ENCODE measurements at regions of chr6 and their contacts with region 1.

Region 1: GRCh38 chr6:52162940-52163908 is 23.0 kb upstream of the IL17A start:
- DNase-seq: peak in 1 of 2 experiments; percentile 36
- H3K4me3 ChIP-seq: no peak overlapping the region
- H3K4me3 Mint-ChIP-seq: no peak overlapping the region
- H3K27ac Mint-ChIP-seq: no peak overlapping the region
- H3K4me1 ChIP-seq: no peaks in the 10 kb centered on the region
- H3K4me1 Mint-ChIP-seq: no peaks in the 10 kb centered on the region
- H3K27me3 ChIP-seq: no peaks in the 10 kb centered on the region
- H3K27me3 Mint-ChIP-seq: no peaks in the 10 kb centered on the region
- CTCF ChIP-seq: peak; percentile 74 to 92

Region 2: DNA sequence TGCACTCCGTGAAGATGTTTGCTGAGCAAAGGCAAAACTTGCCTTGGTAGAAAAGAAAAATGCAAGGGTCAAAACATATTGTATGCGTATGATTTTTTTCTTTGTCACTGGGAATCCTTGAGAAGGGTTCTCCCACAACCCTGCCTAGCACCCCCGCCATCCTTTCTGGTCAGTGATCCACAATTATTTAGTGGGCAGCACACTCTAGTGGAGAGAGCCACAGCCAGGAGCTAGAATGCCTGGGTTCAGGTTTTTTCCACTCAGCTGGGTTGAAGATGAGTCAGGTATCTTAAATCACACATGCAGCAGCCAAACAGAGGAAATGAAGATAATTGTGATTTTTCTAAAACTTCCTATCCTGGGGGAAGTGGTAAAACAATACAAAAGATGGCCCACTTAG is 318.9 kb before region 1 on chr6:
- CTCF ChIA-PET with region 1: no interaction called
- POLR2A ChIA-PET with region 1: no interaction called
- intact Hi-C with region 1: no loop called
- DNase-seq: peak in 1 of 2 experiments; percentile 7
- H3K4me3 ChIP-seq: no peak overlapping the region
- H3K4me3 Mint-ChIP-seq: no peak overlapping the region
- H3K27ac Mint-ChIP-seq: no peak overlapping the region
- H3K4me1 ChIP-seq: no peaks in the 10 kb centered on the region
- H3K4me1 Mint-ChIP-seq: no peaks in the 10 kb centered on the region
- H3K27me3 ChIP-seq: no peaks in the 10 kb centered on the region
- H3K27me3 Mint-ChIP-seq: no peaks in the 10 kb centered on the region
- CTCF ChIP-seq: peak in 1 of 2 experiments; percentile 24

Region 3: DNA sequence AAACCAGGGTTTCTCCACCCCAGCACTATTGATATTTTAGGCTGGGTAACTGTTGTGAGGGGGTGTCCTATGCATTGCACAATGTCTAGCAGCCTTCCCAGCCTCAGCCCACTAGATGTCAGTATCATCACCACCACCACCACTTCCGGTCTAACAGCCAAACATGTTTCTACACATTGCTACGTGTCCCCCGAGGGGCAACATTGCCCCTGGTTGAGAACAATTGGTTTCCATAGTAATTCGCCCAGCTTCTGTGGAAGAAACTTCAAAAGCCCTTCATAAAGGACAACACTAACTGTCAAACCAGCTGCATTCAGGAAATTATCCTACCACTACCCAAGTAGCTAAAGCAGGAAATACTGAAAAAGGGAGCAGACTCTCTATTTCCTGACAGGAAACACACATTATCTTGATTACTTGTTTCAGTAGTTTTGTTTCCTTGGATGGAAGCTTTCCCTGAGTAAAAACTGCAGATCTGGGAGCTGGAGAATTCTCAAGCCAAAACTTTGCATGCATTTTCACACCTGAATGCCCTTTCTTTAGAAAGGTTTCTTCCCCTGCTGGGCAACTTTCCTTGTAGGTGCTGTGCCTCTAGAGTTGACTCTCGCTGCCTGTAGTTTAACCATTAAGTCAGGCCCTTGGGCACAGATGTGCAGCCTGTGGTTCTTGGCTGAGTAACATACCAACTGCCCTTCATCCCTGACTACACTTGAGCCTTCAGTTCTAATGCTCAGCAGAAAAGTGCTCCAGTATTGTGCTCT is 99.5 kb before region 1 on chr6:
- CTCF ChIA-PET with region 1: no interaction called
- POLR2A ChIA-PET with region 1: no interaction called
- intact Hi-C with region 1: loop called (anchors 1 kb)
- DNase-seq: peak; percentile 48 to 63
- H3K4me3 ChIP-seq: no peak overlapping the region
- H3K4me3 Mint-ChIP-seq: no peak overlapping the region
- H3K27ac Mint-ChIP-seq: peak overlapping the region; percentile 59
- H3K4me1 ChIP-seq: 0 out of 2 replicates have a peak, but pooled peaks cover 4% of the 10 kb centered on the region
- H3K4me1 Mint-ChIP-seq: peaks cover 7% of the 10 kb centered on the region
- H3K27me3 ChIP-seq: no peaks in the 10 kb centered on the region
- H3K27me3 Mint-ChIP-seq: no peaks in the 10 kb centered on the region
- CTCF ChIP-seq: peak; percentile 55 to 71

Region 4: DNA sequence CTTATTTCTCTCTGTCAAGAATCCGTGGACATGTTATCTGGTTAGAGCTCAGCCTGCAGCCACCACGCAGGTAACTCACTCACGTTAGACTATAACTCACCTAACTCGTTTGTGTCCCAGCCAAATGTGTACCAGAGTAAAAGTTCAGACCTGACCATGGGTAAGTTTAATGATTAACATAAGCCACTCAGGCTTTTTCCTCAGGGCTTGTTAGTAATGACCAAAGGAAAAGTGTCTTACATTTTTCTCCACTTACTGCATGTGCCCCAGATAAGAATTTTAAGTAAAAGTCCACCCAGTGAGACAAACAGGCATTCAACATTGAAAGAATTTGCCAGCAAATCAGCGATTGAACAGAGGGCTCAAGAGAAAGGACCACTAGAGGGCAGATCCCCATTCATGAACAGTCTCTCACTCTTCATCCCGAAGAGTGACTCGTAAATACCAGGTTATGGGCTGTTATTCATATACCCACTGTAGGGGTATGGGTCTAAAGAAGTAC is 75.7 kb before region 1 on chr6 and contains the start of gene PKHD1:
- CTCF ChIA-PET with region 1: no interaction called
- POLR2A ChIA-PET with region 1: no interaction called
- intact Hi-C with region 1: loop called (anchors 1 kb)
- DNase-seq: peak; percentile 78 to 79
- H3K4me3 ChIP-seq: peak within 1 kb of the TSS; percentile 43
- H3K4me3 Mint-ChIP-seq: peak within 1 kb of the TSS; percentile 76
- H3K27ac Mint-ChIP-seq: peak within 1 kb of the TSS; percentile 58
- H3K4me1 ChIP-seq: peaks cover 7% of the 10 kb centered on the region; the same call in 1 of the 2 replicates
- H3K4me1 Mint-ChIP-seq: peaks cover 13% of the 10 kb centered on the region
- H3K27me3 ChIP-seq: no peaks in the 10 kb centered on the region
- H3K27me3 Mint-ChIP-seq: no peaks in the 10 kb centered on the region
- CTCF ChIP-seq: peak; percentile 53 to 72
- total RNA-seq, gene PKHD1: 2.7 and 3.3 TPM in 2 replicates

Region 5: GRCh38 chr6:52209770-52210169 is 46.5 kb after region 1 on chr6:
- CTCF ChIA-PET with region 1: interaction called, 4 read pairs
- POLR2A ChIA-PET with region 1: no interaction called
- intact Hi-C with region 1: loop called (anchors 2 kb)
- DNase-seq: no peak
- H3K4me3 ChIP-seq: no peak overlapping the region
- H3K4me3 Mint-ChIP-seq: no peak overlapping the region
- H3K27ac Mint-ChIP-seq: no peak overlapping the region
- H3K4me1 ChIP-seq: no peaks in the 10 kb centered on the region
- H3K4me1 Mint-ChIP-seq: no peaks in the 10 kb centered on the region
- H3K27me3 ChIP-seq: no peaks in the 10 kb centered on the region
- H3K27me3 Mint-ChIP-seq: peaks cover 10% of the 10 kb centered on the region
- CTCF ChIP-seq: no peak

Region 6: DNA sequence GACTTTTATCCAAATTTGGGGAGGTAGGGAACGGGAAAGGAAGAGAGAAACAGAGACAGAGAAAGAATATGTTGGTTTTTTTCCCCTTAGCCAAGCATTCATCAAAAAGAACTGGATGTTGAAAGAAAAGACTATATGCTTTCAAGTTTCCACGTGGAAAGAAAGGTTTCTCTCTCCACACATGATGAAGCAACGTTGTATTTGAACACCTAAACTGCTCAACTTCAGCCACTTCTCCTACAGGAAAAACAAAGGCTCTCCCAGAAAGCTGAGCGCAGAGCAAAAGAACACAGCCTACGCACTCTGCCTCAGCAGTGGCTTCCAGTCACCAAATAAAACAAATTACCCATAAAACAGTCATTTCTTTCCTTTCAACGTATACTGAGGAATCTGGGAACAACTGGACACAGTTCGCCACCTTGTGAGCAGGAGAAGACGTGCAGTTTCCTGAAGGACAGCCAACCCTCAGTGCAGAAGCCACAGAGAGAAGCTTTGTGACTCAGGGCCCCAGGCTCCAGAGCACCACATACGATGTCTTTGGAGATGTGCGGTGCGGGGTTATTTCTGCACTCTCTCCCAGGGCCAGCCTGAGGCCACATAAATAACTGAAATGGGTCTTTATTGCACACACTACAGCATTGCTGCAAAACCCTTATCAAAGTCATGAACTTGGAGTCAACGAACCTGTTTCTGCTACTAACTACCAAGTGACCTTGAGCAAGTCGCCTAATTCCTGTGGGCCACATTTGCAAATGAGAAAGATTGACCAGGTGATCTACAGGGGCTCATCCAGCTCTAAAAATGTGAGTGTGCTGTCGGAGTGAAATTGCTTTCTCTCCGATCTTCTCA is 71.0 kb after region 1 on chr6:
- CTCF ChIA-PET with region 1: interaction called, 11 read pairs
- POLR2A ChIA-PET with region 1: no interaction called
- intact Hi-C with region 1: loop called (anchors 1 kb)
- DNase-seq: peak; percentile 60 to 63
- H3K4me3 ChIP-seq: no peak overlapping the region
- H3K4me3 Mint-ChIP-seq: no peak overlapping the region
- H3K27ac Mint-ChIP-seq: no peak overlapping the region
- H3K4me1 ChIP-seq: no peaks in the 10 kb centered on the region
- H3K4me1 Mint-ChIP-seq: no peaks in the 10 kb centered on the region
- H3K27me3 ChIP-seq: no peaks in the 10 kb centered on the region
- H3K27me3 Mint-ChIP-seq: peaks cover 4% of the 10 kb centered on the region
- CTCF ChIP-seq: peak; percentile 59 to 80

Region 7: GRCh38 chr6:52263709-52264540 is 100.7 kb after region 1 on chr6:
- CTCF ChIA-PET with region 1: interaction called, 3 read pairs
- POLR2A ChIA-PET with region 1: no interaction called
- intact Hi-C with region 1: loop called (anchors 1 kb)
- DNase-seq: peak; percentile 54 to 72
- H3K4me3 ChIP-seq: no peak overlapping the region
- H3K4me3 Mint-ChIP-seq: no peak overlapping the region
- H3K27ac Mint-ChIP-seq: no peak overlapping the region
- H3K4me1 ChIP-seq: no peaks in the 10 kb centered on the region
- H3K4me1 Mint-ChIP-seq: no peaks in the 10 kb centered on the region
- H3K27me3 ChIP-seq: no peaks in the 10 kb centered on the region
- H3K27me3 Mint-ChIP-seq: no peaks in the 10 kb centered on the region
- CTCF ChIP-seq: peak; percentile 83 to 91

Region 8: DNA sequence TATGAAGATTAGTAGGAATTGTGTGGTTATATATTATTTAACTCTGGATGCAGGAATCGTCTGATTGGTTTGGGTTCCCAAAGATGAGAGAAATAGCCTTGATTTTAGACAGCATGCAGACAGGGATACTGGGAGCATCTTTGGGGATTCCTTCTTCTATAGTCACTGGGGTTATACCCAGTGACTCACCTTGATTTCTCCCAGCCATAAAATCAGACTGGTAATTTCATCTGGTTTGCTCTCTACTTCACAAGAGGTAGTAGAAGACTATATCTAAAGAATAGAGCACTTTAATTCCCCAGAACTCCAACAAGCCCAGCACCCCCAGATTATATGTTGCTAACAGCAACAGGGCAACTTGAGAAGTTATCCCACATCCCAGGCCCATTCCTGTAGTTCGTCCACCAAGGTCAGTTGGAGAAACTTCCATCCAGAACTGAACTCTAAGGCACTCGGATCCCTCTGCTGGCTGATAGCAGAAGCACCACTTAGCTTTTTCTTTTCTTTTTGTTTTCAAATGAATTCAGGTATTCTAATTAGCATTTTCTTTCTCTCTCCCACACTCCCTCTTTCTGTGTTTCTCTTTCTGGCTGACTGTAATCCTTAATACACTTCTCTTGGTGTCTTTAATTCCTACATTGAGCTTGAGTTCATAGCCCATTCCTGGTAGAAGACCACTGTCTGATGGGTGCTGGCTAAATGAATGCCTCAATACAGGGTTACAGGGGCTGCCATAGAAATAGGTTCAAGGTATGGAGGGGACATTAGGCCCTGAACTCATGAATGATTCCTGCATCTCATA is 236.5 kb after region 1 on chr6:
- CTCF ChIA-PET with region 1: no interaction called
- POLR2A ChIA-PET with region 1: no interaction called
- intact Hi-C with region 1: loop called (anchors 5 kb)
- DNase-seq: peak; percentile 39 to 56
- H3K4me3 ChIP-seq: no peak overlapping the region
- H3K4me3 Mint-ChIP-seq: no peak overlapping the region
- H3K27ac Mint-ChIP-seq: no peak overlapping the region
- H3K4me1 ChIP-seq: no peaks in the 10 kb centered on the region
- H3K4me1 Mint-ChIP-seq: no peaks in the 10 kb centered on the region
- H3K27me3 ChIP-seq: no peaks in the 10 kb centered on the region
- H3K27me3 Mint-ChIP-seq: no peaks in the 10 kb centered on the region
- CTCF ChIP-seq: peak; percentile 79 to 84